ENCODE measurements at regions of chr11 and their contacts with region 1.

Region 1: DNA sequence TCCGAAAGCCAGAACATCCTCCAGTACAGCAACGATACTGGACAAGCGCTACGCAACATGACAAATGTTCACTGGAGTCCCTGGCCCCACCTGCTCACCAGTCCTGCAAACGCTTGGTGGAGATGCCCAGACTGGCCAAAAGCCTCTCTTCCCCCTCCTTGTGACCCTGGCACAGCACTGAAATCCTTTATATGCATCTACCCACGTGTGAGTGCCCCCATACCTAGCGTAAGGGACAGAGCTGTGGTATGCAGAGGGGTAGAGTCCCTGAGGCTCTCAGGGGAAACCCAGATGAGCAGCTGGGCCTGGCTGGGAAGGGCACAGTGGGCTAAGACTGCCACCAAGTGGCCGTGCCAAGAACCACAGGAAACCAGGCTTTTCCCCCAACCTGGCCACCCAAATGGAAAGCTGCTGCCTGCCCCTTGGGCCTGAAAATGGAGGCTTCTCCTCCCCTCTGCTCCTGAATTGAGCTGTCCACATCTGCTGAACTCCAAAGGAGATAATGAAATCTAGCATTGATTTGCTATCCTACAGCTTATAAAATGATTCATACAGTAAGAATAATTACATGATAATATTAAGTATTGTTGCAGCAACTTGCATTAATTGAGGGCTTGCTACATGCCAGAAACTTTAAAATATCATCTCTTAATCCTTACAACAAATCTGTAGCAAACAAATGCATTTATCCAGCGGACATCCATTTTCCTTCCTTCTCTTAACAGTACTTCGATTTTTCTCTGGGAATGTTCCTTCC is 24.8 kb upstream of the TTC12 start:
- DNase-seq: peak; percentile 83
- H3K4me3 ChIP-seq: no peak overlapping the region; a peak in 1 of 4 replicates
- H3K27ac ChIP-seq: no peak overlapping the region
- H3K4me1 ChIP-seq: peaks cover 0 to 8% of the 10 kb centered on the region in 2 experiments; a peak in 2 of 4 replicates
- H3K27me3 ChIP-seq: no peaks in the 10 kb centered on the region
- CTCF ChIP-seq: peak; percentile 93
- EP300 ChIP-seq: no peak
- RAD21 ChIP-seq: peak; percentile 100

Region 2: GRCh38 chr11:112219476-112220232 is 1070.0 kb before region 1 on chr11:
- CTCF ChIA-PET with region 1: interaction called, 10 read pairs
- POLR2A ChIA-PET with region 1: no interaction called
- DNase-seq: peak; percentile 72
- H3K4me3 ChIP-seq: no peak overlapping the region; a peak in 1 of 4 replicates
- H3K27ac ChIP-seq: no peak overlapping the region
- H3K4me1 ChIP-seq: peaks cover 3 to 21% of the 10 kb centered on the region in 2 experiments
- H3K27me3 ChIP-seq: no peaks in the 10 kb centered on the region
- CTCF ChIP-seq: peak; percentile 78
- EP300 ChIP-seq: no peak
- RAD21 ChIP-seq: peak; percentile 95

Region 3: GRCh38 chr11:112364962-112365481 is 924.6 kb before region 1 on chr11:
- CTCF ChIA-PET with region 1: interaction called, 10 read pairs
- POLR2A ChIA-PET with region 1: no interaction called
- DNase-seq: peak; percentile 49
- H3K4me3 ChIP-seq: no peak overlapping the region
- H3K27ac ChIP-seq: peak overlapping the region in 1 of 2 experiments; percentile 62; a peak in 2 of 4 replicates
- H3K4me1 ChIP-seq: peaks cover 0 to 24% of the 10 kb centered on the region in 2 experiments; a peak in 1 of 4 replicates
- H3K27me3 ChIP-seq: no peaks in the 10 kb centered on the region
- CTCF ChIP-seq: no peak
- EP300 ChIP-seq: peak in 1 of 2 experiments; percentile 77; a peak in 1 of 4 replicates
- RAD21 ChIP-seq: peak; percentile 18; the same call in 1 of the 2 replicates

Region 4: GRCh38 chr11:112795142-112795815 is 494.3 kb before region 1 on chr11:
- CTCF ChIA-PET with region 1: interaction called, 12 read pairs
- POLR2A ChIA-PET with region 1: no interaction called
- DNase-seq: peak; percentile 56
- H3K4me3 ChIP-seq: no peak overlapping the region; a peak in 1 of 4 replicates
- H3K27ac ChIP-seq: no peak overlapping the region
- H3K4me1 ChIP-seq: peaks cover 0 to 22% of the 10 kb centered on the region in 2 experiments; a peak in 1 of 4 replicates
- H3K27me3 ChIP-seq: no peaks in the 10 kb centered on the region
- CTCF ChIP-seq: peak; percentile 78
- EP300 ChIP-seq: no peak
- RAD21 ChIP-seq: peak; percentile 71

Region 5: GRCh38 chr11:112968941-112969713 is 320.5 kb before region 1 on chr11:
- CTCF ChIA-PET with region 1: interaction called, 10 read pairs
- POLR2A ChIA-PET with region 1: no interaction called
- DNase-seq: peak; percentile 25
- H3K4me3 ChIP-seq: no peak overlapping the region
- H3K27ac ChIP-seq: peak overlapping the region in 1 of 2 experiments; percentile 83; a peak in 2 of 4 replicates
- H3K4me1 ChIP-seq: peaks cover 0 to 24% of the 10 kb centered on the region in 2 experiments; a peak in 2 of 4 replicates
- H3K27me3 ChIP-seq: no peaks in the 10 kb centered on the region
- CTCF ChIP-seq: no peak
- EP300 ChIP-seq: no peak
- RAD21 ChIP-seq: no peak

Region 6: GRCh38 chr11:113147249-113147648 is 142.4 kb before region 1 on chr11:
- CTCF ChIA-PET with region 1: interaction called, 14 read pairs
- POLR2A ChIA-PET with region 1: no interaction called
- DNase-seq: no peak
- H3K4me3 ChIP-seq: no peak overlapping the region
- H3K27ac ChIP-seq: peak overlapping the region in 1 of 2 experiments; percentile 78; a peak in 2 of 4 replicates
- H3K4me1 ChIP-seq: peaks cover 0 to 17% of the 10 kb centered on the region in 2 experiments; a peak in 2 of 4 replicates
- H3K27me3 ChIP-seq: no peaks in the 10 kb centered on the region
- CTCF ChIP-seq: no peak
- EP300 ChIP-seq: no peak
- RAD21 ChIP-seq: no peak

Measured in SK-N-SH (cell line).